Naive thymus-derived CD4-positive, alpha-beta T cell (primary cell): ENCODE measurements at regions of chr3 and their contacts with region 1.

Region 1: DNA sequence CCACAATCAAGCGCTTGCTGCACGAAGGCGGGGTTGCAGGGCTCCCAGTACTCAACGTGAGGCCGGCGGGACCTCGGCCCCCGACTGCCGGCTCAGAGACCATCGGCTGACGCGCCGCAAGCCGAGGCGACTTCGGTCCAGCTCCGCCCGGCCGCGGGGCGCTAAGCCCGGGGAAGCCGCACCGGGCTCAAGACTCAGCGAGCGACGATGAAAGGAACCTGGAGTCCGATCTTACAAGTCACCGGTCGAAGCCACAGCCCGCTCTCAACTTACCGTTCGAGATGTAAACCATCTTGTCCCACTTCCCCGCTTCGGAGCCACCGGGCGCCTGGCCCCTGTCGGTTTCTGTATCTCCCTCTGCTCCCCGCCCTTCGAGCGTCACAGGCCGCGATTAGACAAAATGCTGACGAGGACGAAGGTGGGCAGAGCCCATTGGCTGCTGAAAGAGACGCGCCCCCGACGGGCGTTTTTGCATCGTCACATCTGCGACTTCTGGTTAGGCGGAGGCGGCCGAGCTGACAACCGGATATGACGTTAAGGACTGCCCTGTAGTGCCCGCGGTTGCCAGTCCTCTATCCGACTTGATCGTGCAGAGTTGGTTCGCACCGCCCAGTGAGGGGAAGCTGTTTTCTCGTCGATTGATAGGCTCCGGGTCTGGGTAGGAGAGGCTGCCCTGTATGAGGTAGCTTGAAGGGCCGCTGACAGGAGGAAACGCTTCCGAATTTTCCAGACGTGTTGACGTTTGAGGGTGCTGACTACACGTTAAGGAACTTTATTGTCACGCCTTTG is at the start of gene SELENOK:
- DNase-seq: peak; percentile 84 to 98 (median 97)
- ATAC-seq: peak; percentile 97
- H3K4me3 ChIP-seq: peak within 1 kb of the TSS; percentile 81
- H3K4me3 Mint-ChIP-seq: peak within 1 kb of the TSS; percentile 89 to 98 (median 94)
- H3K27ac ChIP-seq: peak within 1 kb of the TSS; percentile 98
- H3K27ac Mint-ChIP-seq: peak within 1 kb of the TSS; percentile 97 to 99 (median 99)
- H3K4me1 ChIP-seq: peaks cover 12 to 36% of the 10 kb centered on the region in 2 donors
- H3K4me1 Mint-ChIP-seq: peaks cover 30 to 64% (median 60%) of the 10 kb centered on the region in 7 donors
- H3K27me3 ChIP-seq: no peaks in the 10 kb centered on the region
- H3K27me3 Mint-ChIP-seq: peaks cover 1 to 29% (median 17%) of the 10 kb centered on the region in 5 donors
- total RNA-seq, gene SELENOK: 33.6 to 104 (median 45.4) TPM

Region 2: GRCh38 chr3:53160660-53161449 is 730.8 kb before region 1 on chr3 and contains the start of gene PRKCD:
- CTCF ChIA-PET with region 1: no interaction called
- POLR2A ChIA-PET with region 1: no interaction called
- intact Hi-C with region 1: loop called in 1 of 2 experiments (anchors 1 kb)
- DNase-seq: peak; percentile 55 to 81 (median 71)
- ATAC-seq: peak; percentile 82
- H3K4me3 ChIP-seq: peak within 1 kb of the TSS; percentile 68
- H3K4me3 Mint-ChIP-seq: peak within 1 kb of the TSS; percentile 80 to 95 (median 92)
- H3K27ac ChIP-seq: peak within 1 kb of the TSS; percentile 77
- H3K27ac Mint-ChIP-seq: peak within 1 kb of the TSS; percentile 75 to 94 (median 90)
- H3K4me1 ChIP-seq: peaks cover 9 to 22% of the 10 kb centered on the region in 2 donors
- H3K4me1 Mint-ChIP-seq: peaks cover 18 to 30% (median 23%) of the 10 kb centered on the region in 7 donors
- H3K27me3 ChIP-seq: no peaks in the 10 kb centered on the region
- H3K27me3 Mint-ChIP-seq: peaks cover 0 to 40% (median 12%) of the 10 kb centered on the region in 5 donors
- total RNA-seq, gene PRKCD: 10.2 to 72.8 (median 18.7) TPM

Region 3: GRCh38 chr3:55639884-55640765 is 1748.4 kb after region 1 on chr3:
- CTCF ChIA-PET with region 1: no interaction called
- POLR2A ChIA-PET with region 1: no interaction called
- intact Hi-C with region 1: no loop called
- DNase-seq: peak in 1 of 9 donors; percentile 0
- ATAC-seq: no peak
- H3K4me3 ChIP-seq: no peak overlapping the region
- H3K4me3 Mint-ChIP-seq: peak overlapping the region in 5 of 10 donors; percentile 30 to 76 (median 46)
- H3K27ac ChIP-seq: no peak overlapping the region
- H3K27ac Mint-ChIP-seq: peak overlapping the region in 1 of 9 donors; percentile 70
- H3K4me1 ChIP-seq: no peaks in the 10 kb centered on the region
- H3K4me1 Mint-ChIP-seq: peaks cover 0 to 17% (median 0%) of the 10 kb centered on the region in 7 donors
- H3K27me3 ChIP-seq: no peaks in the 10 kb centered on the region
- H3K27me3 Mint-ChIP-seq: peaks cover 0 to 15% (median 12%) of the 10 kb centered on the region in 5 donors